MCF 10A (cell line): ENCODE measurements at regions of chr2 and their contacts with region 1.

Region 1: GRCh38 chr2:39913648-39914461 is 134.8 kb upstream of the THUMPD2 start:
- DNase-seq: peak; percentile 79
- H3K4me3 Mint-ChIP-seq: no peak overlapping the region
- H3K27ac Mint-ChIP-seq: no peak overlapping the region
- H3K4me1 Mint-ChIP-seq: peaks cover 7% of the 10 kb centered on the region
- H3K27me3 Mint-ChIP-seq: peaks cover 9% of the 10 kb centered on the region
- CTCF ChIP-seq: peak; percentile 76

Region 2: GRCh38 chr2:40101131-40101575 is 187.3 kb after region 1 on chr2:
- CTCF ChIA-PET with region 1: no interaction called
- POLR2A ChIA-PET with region 1: no interaction called
- intact Hi-C with region 1: loop called (anchors 10 kb)
- DNase-seq: no peak
- H3K4me3 Mint-ChIP-seq: no peak overlapping the region
- H3K27ac Mint-ChIP-seq: peak overlapping the region; percentile 82
- H3K4me1 Mint-ChIP-seq: peaks cover 43% of the 10 kb centered on the region
- H3K27me3 Mint-ChIP-seq: no peaks in the 10 kb centered on the region
- CTCF ChIP-seq: no peak

Region 3: GRCh38 chr2:40448468-40449079 is 534.7 kb after region 1 on chr2:
- CTCF ChIA-PET with region 1: interaction called, 10 read pairs
- POLR2A ChIA-PET with region 1: no interaction called
- intact Hi-C with region 1: loop called (anchors 1 kb)
- DNase-seq: peak; percentile 54
- H3K4me3 Mint-ChIP-seq: no peak overlapping the region
- H3K27ac Mint-ChIP-seq: no peak overlapping the region
- H3K4me1 Mint-ChIP-seq: peaks cover 17% of the 10 kb centered on the region
- H3K27me3 Mint-ChIP-seq: no peaks in the 10 kb centered on the region
- CTCF ChIP-seq: peak; percentile 45

Region 4: DNA sequence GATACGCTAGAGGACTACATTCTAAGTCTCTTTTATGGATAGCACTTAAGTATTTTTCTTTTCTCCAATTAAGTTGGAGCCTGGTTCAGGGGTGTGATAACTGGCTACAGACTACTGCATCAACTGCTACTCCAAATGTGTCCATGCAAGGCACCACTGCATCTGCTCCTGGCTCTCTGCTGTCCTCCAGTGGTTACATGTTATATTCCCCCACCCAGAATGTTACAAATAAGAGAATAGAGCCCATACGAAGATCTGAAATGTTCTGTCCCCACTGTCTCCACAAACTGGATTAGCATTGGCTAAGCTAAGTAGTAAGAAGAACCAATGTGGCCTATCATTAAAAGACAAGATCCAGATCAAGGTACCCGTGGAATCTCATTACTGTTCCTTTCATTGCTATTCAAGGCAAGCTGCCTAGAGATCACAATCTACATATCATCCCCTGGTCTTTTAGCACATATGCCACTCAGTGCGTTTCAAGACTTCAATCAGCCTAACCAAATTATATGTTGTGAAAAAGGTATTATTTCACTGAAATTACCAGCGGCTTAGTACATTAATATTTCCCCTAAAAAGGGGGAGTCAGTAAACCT is 846.3 kb after region 1 on chr2:
- CTCF ChIA-PET with region 1: interaction called, 6 read pairs
- POLR2A ChIA-PET with region 1: no interaction called
- intact Hi-C with region 1: loop called (anchors 1 kb)
- DNase-seq: peak; percentile 64
- H3K4me3 Mint-ChIP-seq: no peak overlapping the region
- H3K27ac Mint-ChIP-seq: no peak overlapping the region
- H3K4me1 Mint-ChIP-seq: no peaks in the 10 kb centered on the region
- H3K27me3 Mint-ChIP-seq: no peaks in the 10 kb centered on the region
- CTCF ChIP-seq: peak; percentile 87

Region 5: DNA sequence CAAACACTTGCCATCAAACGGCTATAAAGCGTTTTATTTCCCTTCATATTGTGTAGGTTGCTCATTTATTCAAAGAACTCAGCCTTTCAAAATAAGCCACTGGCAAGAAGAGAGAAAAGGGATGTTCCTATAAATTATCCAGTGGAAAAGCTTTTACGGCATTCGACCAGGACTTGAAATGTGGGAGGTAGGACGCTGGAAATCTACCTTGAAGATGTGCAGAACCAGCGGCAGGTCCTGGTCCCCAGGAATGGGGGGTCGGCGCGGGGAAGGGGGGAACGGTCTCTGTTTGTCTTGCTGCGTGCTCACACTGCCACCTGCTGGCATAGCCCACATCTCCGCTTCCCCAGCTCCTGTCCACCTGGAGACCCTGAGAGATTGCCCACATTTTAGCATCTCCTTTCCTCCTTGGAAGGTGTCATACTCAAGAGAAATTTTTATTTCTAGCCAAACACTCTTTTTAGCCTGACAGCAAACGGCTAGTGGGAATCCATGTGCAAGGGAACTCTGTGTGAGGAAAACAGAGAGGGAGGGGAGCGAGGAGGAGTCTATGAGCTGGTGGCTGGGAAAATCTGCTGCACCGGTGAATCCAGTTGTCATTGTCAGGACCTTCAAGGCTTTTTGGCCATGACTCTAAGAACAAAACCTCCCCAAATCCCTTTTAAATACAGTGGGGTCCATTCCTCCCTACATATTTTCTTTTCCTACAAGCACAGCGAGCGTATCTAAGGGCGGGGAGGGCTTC is 1785.0 kb after region 1 on chr2:
- CTCF ChIA-PET with region 1: interaction called, 14 read pairs
- POLR2A ChIA-PET with region 1: no interaction called
- intact Hi-C with region 1: no loop called
- DNase-seq: no peak
- H3K4me3 Mint-ChIP-seq: no peak overlapping the region
- H3K27ac Mint-ChIP-seq: no peak overlapping the region
- H3K4me1 Mint-ChIP-seq: no peaks in the 10 kb centered on the region
- H3K27me3 Mint-ChIP-seq: no peaks in the 10 kb centered on the region
- CTCF ChIP-seq: peak; percentile 69